ENCODE measurements at regions of chr5 and their contacts with region 1.

Region 1: GRCh38 chr5:95746722-95747679 is 15.9 kb downstream of the RHOBTB3 start:
- DNase-seq: no peak
- ATAC-seq: no peak
- H3K4me3 ChIP-seq: no peak overlapping the region
- H3K27ac ChIP-seq: no peak overlapping the region
- H3K4me1 ChIP-seq: peaks cover 2 to 5% of the 10 kb centered on the region in 2 experiments; a peak in 2 of 4 replicates
- H3K27me3 ChIP-seq: no peaks in the 10 kb centered on the region
- CTCF ChIP-seq: no peak
- POLR2A ChIP-seq: no peak
- RAD21 ChIP-seq: no peak

Region 2: GRCh38 chr5:95709967-95710685 is 36.9 kb before region 1 on chr5:
- CTCF ChIA-PET with region 1: no interaction called
- POLR2A ChIA-PET with region 1: no interaction called
- RAD21 ChIA-PET with region 1: no interaction called
- intact Hi-C with region 1: loop called (anchors 1 kb)
- DNase-seq: peak; percentile 71
- ATAC-seq: peak; percentile 52
- H3K4me3 ChIP-seq: peak overlapping the region in 1 of 2 experiments; percentile 54; a peak in 3 of 4 replicates
- H3K27ac ChIP-seq: peak overlapping the region; percentile 90
- H3K4me1 ChIP-seq: peaks cover 48 to 63% of the 10 kb centered on the region in 2 experiments
- H3K27me3 ChIP-seq: no peaks in the 10 kb centered on the region
- CTCF ChIP-seq: no peak
- POLR2A ChIP-seq: no peak
- RAD21 ChIP-seq: no peak

Measured in HCT116 (cell line).